AG04449 (cell line): ENCODE measurements at regions of chr14 and their contacts with region 1.

Region 1: DNA sequence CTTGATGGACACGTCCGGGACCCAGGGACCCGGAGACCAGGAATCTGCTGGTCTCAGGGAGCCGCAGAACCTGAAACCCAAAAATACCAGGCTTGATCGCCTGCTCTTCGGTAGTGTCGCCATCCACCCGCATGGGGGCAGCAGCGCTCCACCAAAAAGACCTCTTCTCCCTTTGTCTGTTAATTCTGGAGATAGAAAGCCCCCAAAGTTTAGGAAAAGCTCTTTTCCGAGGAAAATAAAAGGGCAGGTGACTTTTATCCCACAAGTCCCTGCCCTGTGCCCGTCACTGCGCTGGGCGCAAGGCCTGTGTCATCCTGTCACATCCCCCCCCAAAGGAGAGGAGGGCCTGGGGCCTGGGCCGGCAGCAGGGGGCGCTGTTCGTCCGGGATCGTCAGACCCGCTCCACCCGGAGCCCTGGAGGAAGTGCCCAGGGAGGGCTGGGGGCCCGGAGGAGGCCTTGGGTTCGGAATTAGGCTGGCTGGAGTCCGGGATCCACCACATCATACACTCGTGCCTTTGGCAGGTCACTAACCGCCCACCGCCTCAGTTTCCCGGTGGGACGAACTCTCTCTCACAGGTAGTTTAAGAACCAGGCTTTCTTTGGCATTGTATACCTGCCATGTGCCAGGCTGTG is 31.9 kb downstream of the DAD1 start:
- DNase-seq: no peak
- H3K4me3 ChIP-seq: peak overlapping the region; percentile 44
- CTCF ChIP-seq: peak; percentile 96

Region 2: GRCh38 chr14:22531451-22532344 is 25.4 kb before region 1 on chr14:
- CTCF ChIA-PET with region 1: interaction called, 11 read pairs
- POLR2A ChIA-PET with region 1: no interaction called
- DNase-seq: no peak
- H3K4me3 ChIP-seq: no peak overlapping the region
- CTCF ChIP-seq: no peak

Region 3: DNA sequence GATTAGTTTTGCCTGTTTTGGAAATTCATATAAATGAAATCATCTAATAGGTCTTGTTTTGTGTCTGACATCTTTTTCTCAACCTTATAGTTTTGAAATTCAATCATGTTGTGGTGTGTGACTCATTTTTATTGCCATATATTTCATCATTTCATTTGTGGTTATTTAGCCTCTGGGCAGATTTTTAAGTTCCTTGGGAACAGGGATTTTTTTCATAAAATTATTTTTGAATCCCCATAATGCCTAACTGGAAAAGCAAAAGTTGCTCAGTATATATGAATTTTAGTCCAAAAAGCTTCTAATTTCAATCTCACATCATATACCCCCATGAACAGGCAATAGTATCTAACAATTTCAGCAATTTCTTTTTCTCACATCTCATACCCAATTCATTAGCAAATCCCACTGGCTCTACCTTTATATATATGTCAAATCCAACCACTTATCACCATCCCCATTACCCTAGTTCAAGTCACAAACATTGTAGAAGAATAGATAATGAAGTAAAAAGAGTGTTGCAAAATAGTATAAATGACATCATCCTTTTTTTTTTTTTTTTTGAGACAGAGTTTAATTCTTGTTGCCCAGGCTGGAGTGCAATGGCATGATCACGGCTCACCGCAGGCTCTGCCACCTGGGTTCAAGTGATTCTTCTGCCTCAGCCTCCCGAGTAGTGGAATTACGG is 89.6 kb after region 1 on chr14:
- CTCF ChIA-PET with region 1: interaction called, 299 read pairs
- POLR2A ChIA-PET with region 1: no interaction called
- DNase-seq: no peak
- H3K4me3 ChIP-seq: no peak overlapping the region
- CTCF ChIP-seq: no peak

Region 4: GRCh38 chr14:22836301-22837113 is 279.4 kb after region 1 on chr14 and contains the start of gene MMP14:
- CTCF ChIA-PET with region 1: interaction called, 28 read pairs
- POLR2A ChIA-PET with region 1: interaction called, 4 read pairs
- DNase-seq: no peak
- H3K4me3 ChIP-seq: peak within 1 kb of the TSS; percentile 90
- CTCF ChIP-seq: peak; percentile 58

Region 5: DNA sequence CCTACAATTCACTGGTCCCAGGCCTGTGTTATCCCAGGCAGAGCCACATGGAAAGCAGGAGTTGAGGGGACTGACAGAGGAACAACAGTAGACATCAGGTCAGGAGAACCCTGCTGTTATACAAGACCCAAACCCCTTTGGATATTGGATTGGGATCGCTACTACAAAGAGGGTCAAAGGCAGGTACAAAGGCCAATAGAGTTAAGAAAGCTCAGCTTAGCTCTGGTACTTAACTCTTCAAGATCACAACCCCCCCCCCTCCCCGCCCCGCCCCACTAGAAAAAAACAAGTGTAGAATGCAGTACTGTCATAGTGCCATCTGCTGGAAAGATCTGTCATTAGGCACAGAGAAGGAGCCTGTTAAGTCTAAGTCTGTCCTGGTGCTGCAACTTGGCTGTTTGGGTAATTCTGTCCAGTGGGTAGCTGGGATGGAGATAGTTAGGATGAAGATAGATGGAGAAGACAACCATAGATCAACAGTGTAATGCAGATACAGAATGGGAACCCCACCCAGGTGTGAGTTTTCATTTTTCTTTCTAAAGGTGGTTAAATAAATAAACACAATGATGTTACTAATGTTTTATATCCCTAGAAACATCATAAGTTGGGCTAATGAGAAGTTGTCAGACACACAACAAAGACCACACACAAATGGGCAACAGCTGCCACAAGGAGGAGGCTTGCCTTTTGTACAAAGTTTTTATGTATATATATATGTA is 343.1 kb after region 1 on chr14:
- CTCF ChIA-PET with region 1: interaction called, 97 read pairs
- POLR2A ChIA-PET with region 1: no interaction called
- DNase-seq: no peak
- H3K4me3 ChIP-seq: no peak overlapping the region
- CTCF ChIP-seq: peak; percentile 72

Region 6: DNA sequence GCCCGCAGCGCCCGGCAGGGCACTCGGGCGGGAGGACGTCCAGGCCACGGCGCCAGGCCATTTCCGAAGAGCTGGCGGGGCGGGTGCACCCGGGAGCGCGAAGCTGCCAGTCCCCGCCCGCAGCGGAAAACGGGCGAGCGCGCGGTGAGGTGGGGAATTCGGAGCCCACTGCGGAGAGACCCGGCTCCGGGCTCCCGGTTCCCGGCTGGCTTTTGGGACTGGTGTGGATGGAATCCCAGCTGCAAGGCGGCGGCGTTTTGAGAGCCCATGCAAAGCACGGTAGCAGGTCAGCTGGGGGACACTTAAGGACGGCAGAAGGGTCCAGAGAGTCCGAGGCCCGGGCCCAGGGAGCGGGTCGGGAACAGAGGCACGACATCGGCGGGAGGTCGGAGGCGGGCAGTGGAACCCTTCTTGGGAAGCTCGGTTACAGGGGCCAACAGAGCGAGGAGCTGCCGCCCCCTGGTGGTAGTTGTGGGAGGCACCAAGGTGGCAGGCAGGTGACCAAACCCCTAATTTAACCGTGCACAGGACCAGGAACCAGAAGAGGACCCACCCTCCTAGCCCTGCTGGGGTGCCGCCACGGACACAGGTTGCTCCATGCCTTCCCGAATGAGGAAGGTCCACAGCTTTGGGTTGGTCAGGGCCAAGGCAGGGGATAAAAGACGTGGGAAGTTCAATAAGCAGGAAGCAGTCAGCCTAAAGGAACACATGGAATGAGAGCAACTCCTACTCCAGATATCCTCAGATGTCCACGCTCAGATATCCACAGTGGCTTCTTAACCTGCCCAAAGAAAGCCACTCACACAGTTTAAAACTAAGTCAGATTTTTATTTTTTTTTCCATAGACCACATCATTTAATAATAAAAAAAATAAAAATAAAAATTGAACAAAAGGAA is 500.9 kb after region 1 on chr14:
- CTCF ChIA-PET with region 1: interaction called, 44 read pairs
- POLR2A ChIA-PET with region 1: no interaction called
- DNase-seq: no peak
- H3K4me3 ChIP-seq: peak overlapping the region; percentile 60
- CTCF ChIP-seq: peak; percentile 94

Region 7: GRCh38 chr14:23512156-23512555 is 955.0 kb after region 1 on chr14:
- CTCF ChIA-PET with region 1: no interaction called
- POLR2A ChIA-PET with region 1: no interaction called
- DNase-seq: no peak
- H3K4me3 ChIP-seq: no peak overlapping the region
- CTCF ChIP-seq: no peak